Activated CD4-positive, alpha-beta T cell treated with anti-CD3 and anti-CD28 coated beads for 36 hours (primary cell): ENCODE measurements at regions of chr16 and their contacts with region 1.

Region 1: GRCh38 chr16:10918294-10919002 is 23.8 kb downstream of the DEXI start:
- DNase-seq: peak; percentile 92
- ATAC-seq: peak; percentile 74
- H3K4me3 Mint-ChIP-seq: no peak overlapping the region
- H3K27ac Mint-ChIP-seq: no peak overlapping the region
- H3K4me1 Mint-ChIP-seq: peaks cover 13% of the 10 kb centered on the region
- H3K27me3 Mint-ChIP-seq: no peaks in the 10 kb centered on the region

Region 2: GRCh38 chr16:10509534-10510025 is 408.9 kb before region 1 on chr16:
- CTCF ChIA-PET with region 1: interaction called, 16 read pairs
- POLR2A ChIA-PET with region 1: no interaction called
- intact Hi-C with region 1: loop called (anchors 1 kb)
- DNase-seq: peak; percentile 75
- ATAC-seq: peak; percentile 76
- H3K4me3 Mint-ChIP-seq: no peak overlapping the region
- H3K27ac Mint-ChIP-seq: peak overlapping the region; percentile 69
- H3K4me1 Mint-ChIP-seq: peaks cover 28% of the 10 kb centered on the region
- H3K27me3 Mint-ChIP-seq: no peaks in the 10 kb centered on the region

Region 3: GRCh38 chr16:10625593-10626273 is 292.7 kb before region 1 on chr16:
- CTCF ChIA-PET with region 1: no interaction called
- POLR2A ChIA-PET with region 1: no interaction called
- intact Hi-C with region 1: no loop called
- DNase-seq: no peak
- ATAC-seq: no peak
- H3K4me3 Mint-ChIP-seq: no peak overlapping the region
- H3K27ac Mint-ChIP-seq: no peak overlapping the region
- H3K4me1 Mint-ChIP-seq: no peaks in the 10 kb centered on the region
- H3K27me3 Mint-ChIP-seq: peaks cover 3% of the 10 kb centered on the region

Region 4: GRCh38 chr16:10668322-10669045 is 250.0 kb before region 1 on chr16:
- CTCF ChIA-PET with region 1: interaction called, 4 read pairs
- POLR2A ChIA-PET with region 1: no interaction called
- intact Hi-C with region 1: loop called in 1 of 2 experiments (anchors 1 kb)
- DNase-seq: peak; percentile 29
- ATAC-seq: no peak
- H3K4me3 Mint-ChIP-seq: no peak overlapping the region
- H3K27ac Mint-ChIP-seq: no peak overlapping the region
- H3K4me1 Mint-ChIP-seq: no peaks in the 10 kb centered on the region
- H3K27me3 Mint-ChIP-seq: no peaks in the 10 kb centered on the region

Region 5: GRCh38 chr16:10708969-10709368 is 209.5 kb before region 1 on chr16:
- CTCF ChIA-PET with region 1: no interaction called
- POLR2A ChIA-PET with region 1: no interaction called
- intact Hi-C with region 1: no loop called
- DNase-seq: no peak
- ATAC-seq: no peak
- H3K4me3 Mint-ChIP-seq: no peak overlapping the region
- H3K27ac Mint-ChIP-seq: no peak overlapping the region
- H3K4me1 Mint-ChIP-seq: no peaks in the 10 kb centered on the region
- H3K27me3 Mint-ChIP-seq: peaks cover 3% of the 10 kb centered on the region

Region 6: DNA sequence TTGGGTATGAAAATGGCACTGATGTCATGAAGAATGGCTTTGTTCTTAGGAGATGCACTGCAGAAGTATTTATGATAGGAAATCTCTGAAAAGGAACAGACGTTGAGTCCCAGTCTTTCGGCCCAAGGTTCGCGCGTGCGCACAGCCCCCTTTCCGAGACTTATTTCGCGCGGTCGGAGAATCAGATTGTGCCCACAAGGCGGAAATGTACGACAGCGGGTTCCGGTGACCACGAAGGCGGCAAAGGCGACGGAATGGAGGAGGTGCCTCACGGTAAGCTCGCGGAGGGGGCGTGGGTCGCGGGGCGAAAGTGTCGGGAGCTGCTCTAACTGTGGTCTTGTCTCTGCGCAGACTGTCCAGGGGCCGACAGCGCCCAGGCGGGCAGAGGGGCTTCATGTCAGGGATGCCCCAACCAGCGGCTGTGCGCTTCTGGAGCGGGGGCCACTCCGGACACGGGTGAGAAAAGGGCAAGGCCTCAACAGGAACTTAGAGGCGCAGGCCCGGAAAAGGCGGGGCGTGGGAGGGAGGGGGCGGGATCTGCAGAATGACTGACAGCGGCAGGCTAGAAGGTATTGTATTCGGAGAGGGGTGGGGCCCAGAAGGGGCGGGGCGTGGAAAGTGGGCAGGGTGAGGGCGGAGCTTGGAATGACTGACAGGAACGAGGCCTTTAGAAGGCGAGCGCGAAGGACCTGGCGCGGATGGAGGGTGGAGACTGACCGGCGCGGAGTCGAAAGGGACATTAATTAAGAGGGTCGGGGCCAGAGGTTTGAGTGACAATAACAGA is 174.6 kb before region 1 on chr16 and contains the start of gene NUBP1:
- CTCF ChIA-PET with region 1: interaction called, 4 read pairs
- POLR2A ChIA-PET with region 1: interaction called, 4 read pairs
- intact Hi-C with region 1: loop called in 1 of 2 experiments (anchors 2 kb)
- DNase-seq: peak; percentile 100
- ATAC-seq: peak; percentile 95
- H3K4me3 Mint-ChIP-seq: peak within 1 kb of the TSS; percentile 75
- H3K27ac Mint-ChIP-seq: peak within 1 kb of the TSS; percentile 98
- H3K4me1 Mint-ChIP-seq: peaks cover 30% of the 10 kb centered on the region
- H3K27me3 Mint-ChIP-seq: no peaks in the 10 kb centered on the region
- total RNA-seq, gene NUBP1: 25.9 to 33.1 TPM

Region 7: DNA sequence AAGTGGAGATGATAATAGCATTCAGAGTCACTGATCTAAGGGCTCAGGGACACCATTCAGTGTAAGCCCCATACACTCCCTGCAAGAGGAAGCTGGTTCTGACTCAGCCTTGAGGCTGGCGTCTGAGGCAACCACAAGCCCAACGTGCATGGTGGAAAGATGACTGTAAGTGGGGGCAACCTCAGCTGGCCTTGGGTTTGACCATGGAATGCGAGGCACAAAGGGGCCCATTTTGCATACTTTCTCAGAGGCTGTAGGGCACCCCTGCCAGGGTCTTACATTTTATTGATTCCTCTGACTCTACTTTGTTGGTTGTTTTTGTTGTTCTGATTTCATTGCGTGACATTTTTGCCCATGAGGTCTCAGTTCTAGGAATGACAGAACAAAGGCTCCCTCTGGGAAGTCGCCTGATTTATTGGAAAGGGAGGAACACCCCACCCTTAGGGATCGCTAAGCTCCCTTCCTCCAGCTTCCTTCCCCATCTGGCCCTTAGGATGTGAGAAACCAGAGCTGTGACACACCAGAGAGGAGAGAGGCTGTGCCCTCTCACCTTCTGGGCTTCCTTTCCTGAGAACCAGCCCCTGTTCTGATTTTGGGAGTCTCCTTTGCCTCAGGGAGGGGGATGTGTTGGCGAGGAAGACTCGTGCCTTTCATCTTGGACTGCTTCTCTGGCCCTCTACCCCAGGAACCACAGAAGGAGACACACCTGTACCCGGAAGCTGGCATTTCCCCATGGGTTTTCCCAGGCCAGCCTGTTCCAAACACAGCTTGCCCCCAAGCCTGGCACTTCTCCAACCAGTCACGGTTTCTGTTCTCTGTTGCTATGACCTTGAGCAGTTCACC is 47.1 kb before region 1 on chr16:
- CTCF ChIA-PET with region 1: interaction called, 5 read pairs
- POLR2A ChIA-PET with region 1: no interaction called
- intact Hi-C with region 1: loop called (anchors 2 kb)
- DNase-seq: peak; percentile 87
- ATAC-seq: peak; percentile 92
- H3K4me3 Mint-ChIP-seq: peak overlapping the region; percentile 7
- H3K27ac Mint-ChIP-seq: peak overlapping the region; percentile 71
- H3K4me1 Mint-ChIP-seq: peaks cover 51% of the 10 kb centered on the region
- H3K27me3 Mint-ChIP-seq: peaks cover 43% of the 10 kb centered on the region

Region 8: DNA sequence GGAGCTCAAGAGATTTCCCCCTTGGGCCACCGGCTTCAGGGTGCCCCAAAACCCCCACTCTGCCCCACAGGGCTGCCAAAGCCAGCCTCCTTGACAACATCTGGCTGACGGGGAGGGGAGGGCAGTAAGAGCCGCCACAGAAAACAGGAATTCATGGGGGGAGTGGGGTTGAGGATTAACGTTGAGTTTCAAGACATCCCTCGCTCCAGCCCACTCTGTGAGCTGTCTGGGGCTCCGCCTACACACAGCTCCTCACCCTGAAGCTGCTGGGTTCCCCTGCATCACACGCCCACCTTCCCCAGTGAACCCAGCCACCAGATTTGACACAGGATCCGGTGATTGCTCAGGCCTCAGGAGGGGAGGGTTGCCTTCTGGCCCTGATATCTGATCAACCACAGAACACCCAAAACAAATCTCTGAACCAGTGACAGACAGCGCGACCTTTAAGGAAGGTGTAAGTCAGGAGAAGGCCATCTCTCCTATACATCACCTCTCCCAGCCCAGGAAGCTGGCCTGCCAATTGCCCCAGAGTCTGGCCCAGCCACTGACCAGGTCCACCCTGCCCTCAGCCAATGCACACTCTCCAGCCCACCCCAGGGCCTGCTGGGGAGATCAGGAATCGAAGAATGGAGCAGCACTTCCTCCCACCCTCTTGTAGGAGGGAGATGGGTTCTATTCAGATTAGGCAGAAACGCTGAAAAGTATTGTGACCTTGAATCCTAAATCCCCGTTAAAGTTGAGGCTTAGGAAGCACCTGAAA is 158.0 kb after region 1 on chr16:
- CTCF ChIA-PET with region 1: no interaction called
- POLR2A ChIA-PET with region 1: no interaction called
- intact Hi-C with region 1: no loop called
- DNase-seq: peak; percentile 87
- ATAC-seq: peak; percentile 69
- H3K4me3 Mint-ChIP-seq: peak overlapping the region; percentile 15
- H3K27ac Mint-ChIP-seq: peak overlapping the region; percentile 89
- H3K4me1 Mint-ChIP-seq: peaks cover 96% of the 10 kb centered on the region
- H3K27me3 Mint-ChIP-seq: no peaks in the 10 kb centered on the region

Region 9: DNA sequence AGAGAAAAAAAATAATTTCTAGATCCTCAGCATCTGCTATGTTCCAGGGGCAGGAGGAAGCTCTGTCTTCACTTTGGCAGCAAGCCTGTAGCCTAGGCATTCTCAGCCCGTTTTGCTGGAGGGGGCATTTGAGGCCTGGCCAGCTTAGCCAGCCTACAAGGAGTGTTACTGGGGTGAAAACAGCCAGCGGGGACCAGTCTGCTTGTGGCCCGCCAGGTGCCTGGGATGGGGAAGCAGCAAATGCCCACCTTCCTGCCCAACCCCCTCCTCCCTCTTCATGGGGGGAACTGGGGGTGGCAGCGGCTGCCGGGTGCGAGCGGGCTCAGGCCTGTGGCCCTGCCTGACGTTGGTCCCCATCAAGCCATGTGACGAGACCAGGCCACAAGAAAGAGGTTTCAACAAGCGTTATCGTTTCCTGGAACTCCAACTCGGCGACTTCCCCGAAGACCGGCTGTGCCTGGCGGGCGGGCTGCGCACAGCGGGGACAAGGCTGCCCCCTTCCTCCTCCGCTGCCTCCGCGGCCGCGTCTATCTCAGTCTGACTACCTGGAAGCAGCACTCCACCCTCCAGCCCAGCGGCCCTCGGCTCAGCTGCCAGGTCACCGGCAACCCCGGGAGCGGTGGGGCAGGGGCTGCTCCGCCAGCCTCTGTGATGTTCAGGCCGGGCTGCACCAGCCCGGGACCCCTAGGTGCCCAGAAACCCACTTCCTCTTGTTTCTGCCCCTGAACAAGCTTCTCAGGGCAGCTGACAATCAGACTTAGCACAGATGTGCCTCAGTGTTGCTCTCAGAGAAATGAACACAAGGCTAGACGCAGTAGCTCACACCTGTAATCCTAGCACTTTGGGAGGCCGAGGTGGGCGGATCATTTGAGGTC is 314.6 kb after region 1 on chr16:
- CTCF ChIA-PET with region 1: no interaction called
- POLR2A ChIA-PET with region 1: interaction called, 10 read pairs
- intact Hi-C with region 1: no loop called
- DNase-seq: peak; percentile 96
- ATAC-seq: peak; percentile 82
- H3K4me3 Mint-ChIP-seq: peak overlapping the region; percentile 60
- H3K27ac Mint-ChIP-seq: peak overlapping the region; percentile 97
- H3K4me1 Mint-ChIP-seq: peaks cover 80% of the 10 kb centered on the region
- H3K27me3 Mint-ChIP-seq: no peaks in the 10 kb centered on the region